SK-N-SH (cell line): ENCODE measurements at regions of chr3 and their contacts with region 1.

Region 1: GRCh38 chr3:112333002-112333380 is at the start of gene CD200:
- DNase-seq: peak; percentile 79
- H3K4me3 ChIP-seq: peak within 1 kb of the TSS; percentile 57 to 74
- H3K27ac ChIP-seq: peak within 1 kb of the TSS; percentile 27 to 92; a peak in 3 of 4 replicates
- H3K4me1 ChIP-seq: peaks cover 0 to 2% of the 10 kb centered on the region in 2 experiments; a peak in 2 of 4 replicates
- H3K27me3 ChIP-seq: no peaks in the 10 kb centered on the region; the same call in 1 of the 2 replicates
- CTCF ChIP-seq: 0 out of 2 replicates have a peak, but pooled peaks have one; percentile 8
- EP300 ChIP-seq: no peak
- RAD21 ChIP-seq: no peak
- polyA plus RNA-seq, gene CD200: 1.0 and 1.1 TPM in 2 replicates

Region 2: GRCh38 chr3:112303764-112304325 is 29.1 kb before region 1 on chr3:
- CTCF ChIA-PET with region 1: interaction called, 19 read pairs
- POLR2A ChIA-PET with region 1: interaction called, 20 read pairs
- DNase-seq: no peak
- H3K4me3 ChIP-seq: peak overlapping the region; percentile 44 to 49
- H3K27ac ChIP-seq: peak overlapping the region in 1 of 2 experiments; percentile 72; a peak in 2 of 4 replicates
- H3K4me1 ChIP-seq: peaks cover 0 to 36% of the 10 kb centered on the region in 2 experiments; a peak in 2 of 4 replicates
- H3K27me3 ChIP-seq: no peaks in the 10 kb centered on the region
- CTCF ChIP-seq: no peak
- EP300 ChIP-seq: no peak
- RAD21 ChIP-seq: no peak

Region 3: GRCh38 chr3:112321867-112322649 is 10.9 kb before region 1 on chr3:
- CTCF ChIA-PET with region 1: interaction called, 17 read pairs
- POLR2A ChIA-PET with region 1: interaction called, 19 read pairs
- DNase-seq: peak; percentile 29
- H3K4me3 ChIP-seq: no peak overlapping the region; a peak in 1 of 4 replicates
- H3K27ac ChIP-seq: peak overlapping the region in 1 of 2 experiments; percentile 68; a peak in 1 of 4 replicates
- H3K4me1 ChIP-seq: peaks cover 0 to 4% of the 10 kb centered on the region in 2 experiments; a peak in 2 of 4 replicates
- H3K27me3 ChIP-seq: no peaks in the 10 kb centered on the region; the same call in 1 of the 2 replicates
- CTCF ChIP-seq: no peak
- EP300 ChIP-seq: no peak
- RAD21 ChIP-seq: no peak

Region 4: GRCh38 chr3:112425858-112426750 is 93.1 kb after region 1 on chr3:
- CTCF ChIA-PET with region 1: no interaction called
- POLR2A ChIA-PET with region 1: no interaction called
- DNase-seq: no peak
- H3K4me3 ChIP-seq: no peak overlapping the region
- H3K27ac ChIP-seq: no peak overlapping the region
- H3K4me1 ChIP-seq: no peaks in the 10 kb centered on the region
- H3K27me3 ChIP-seq: no peaks in the 10 kb centered on the region
- CTCF ChIP-seq: no peak
- EP300 ChIP-seq: no peak
- RAD21 ChIP-seq: no peak

Region 5: GRCh38 chr3:112561731-112562688 is 229.0 kb after region 1 on chr3 and contains the starts of genes ATG3 and SLC35A5:
- CTCF ChIA-PET with region 1: interaction called, 3 read pairs
- POLR2A ChIA-PET with region 1: interaction called, 19 read pairs
- DNase-seq: peak; percentile 93
- H3K4me3 ChIP-seq: peak within 1 kb of the TSS; percentile 79 to 98
- H3K27ac ChIP-seq: peak within 1 kb of the TSS; percentile 98 to 99
- H3K4me1 ChIP-seq: peaks cover 10 to 14% of the 10 kb centered on the region in 2 experiments; a peak in 2 of 4 replicates
- H3K27me3 ChIP-seq: no peaks in the 10 kb centered on the region
- CTCF ChIP-seq: no peak
- EP300 ChIP-seq: no peak; a peak in 1 of 4 replicates
- RAD21 ChIP-seq: no peak
- polyA plus RNA-seq, gene ATG3: 38.8 and 39.7 TPM in 2 replicates
- polyA plus RNA-seq, gene SLC35A5: 16.0 and 23.2 TPM in 2 replicates